Activated B cell treated with CpG ODN at 0.5 μM for 24 hours (primary cell): ENCODE measurements at regions of chr1 and their contacts with region 1.

Region 1: GRCh38 chr1:92298573-92299476 is at the starts of genes GLMN and RPAP2:
- DNase-seq: peak; percentile 82
- ATAC-seq: peak; percentile 96
- H3K4me3 Mint-ChIP-seq: peak within 1 kb of the TSS; percentile 99
- H3K27ac Mint-ChIP-seq: peak within 1 kb of the TSS; percentile 99
- H3K4me1 Mint-ChIP-seq: peaks cover 31% of the 10 kb centered on the region
- H3K27me3 Mint-ChIP-seq: no peaks in the 10 kb centered on the region
- CTCF ChIP-seq: no peak
- total RNA-seq, gene GLMN: 11.1 and 14.7 TPM in 2 replicates
- total RNA-seq, gene RPAP2: 27.1 and 31.7 TPM in 2 replicates

Region 2: DNA sequence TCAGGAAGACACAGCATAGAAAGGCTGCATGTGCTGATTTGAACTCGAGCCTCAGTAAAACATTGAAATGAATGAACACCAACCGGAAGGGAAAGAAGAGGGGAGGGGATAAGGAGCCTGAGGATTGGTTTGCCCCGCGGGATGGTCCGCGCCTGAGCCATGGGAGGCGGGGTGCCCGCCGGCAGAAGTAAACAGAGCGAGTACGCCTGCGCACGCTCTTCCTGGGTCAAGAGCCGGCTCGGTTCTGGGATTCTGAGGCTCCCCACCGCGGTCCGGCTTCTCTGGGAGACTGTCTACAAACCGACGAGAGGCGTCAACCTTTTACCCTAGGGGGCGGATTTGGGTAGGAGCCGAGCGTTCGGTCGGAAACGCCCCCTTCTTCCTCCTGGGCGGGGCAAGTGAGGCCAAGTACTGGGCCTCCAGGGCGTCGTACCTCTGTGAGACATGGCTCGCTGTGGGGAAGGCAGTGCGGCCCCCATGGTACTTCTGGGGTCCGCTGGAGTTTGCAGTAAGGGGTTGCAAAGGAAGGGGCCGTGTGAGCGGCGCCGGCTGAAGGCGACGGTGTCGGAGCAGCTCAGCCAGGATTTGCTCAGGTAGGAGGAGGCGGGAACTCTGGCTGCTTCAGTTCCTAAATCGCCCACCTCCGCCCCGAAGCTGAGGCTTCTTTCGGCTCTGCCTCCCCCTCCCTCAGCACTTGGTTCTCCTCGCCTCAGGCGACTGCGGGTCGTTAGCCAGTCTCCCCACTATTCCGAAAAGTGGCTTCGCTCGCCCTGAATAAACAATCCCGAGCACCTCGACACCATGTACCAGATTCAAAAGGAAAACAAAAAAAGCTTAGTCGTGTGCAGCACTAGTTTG is 218.5 kb before region 1 on chr1 and contains the start of gene BTBD8:
- CTCF ChIA-PET with region 1: no interaction called
- POLR2A ChIA-PET with region 1: no interaction called
- intact Hi-C with region 1: loop called (anchors 5 kb)
- DNase-seq: peak; percentile 71
- ATAC-seq: peak; percentile 97
- H3K4me3 Mint-ChIP-seq: peak within 1 kb of the TSS; percentile 94
- H3K27ac Mint-ChIP-seq: peak within 1 kb of the TSS; percentile 5
- H3K4me1 Mint-ChIP-seq: peaks cover 7% of the 10 kb centered on the region
- H3K27me3 Mint-ChIP-seq: peaks cover 2% of the 10 kb centered on the region
- CTCF ChIP-seq: no peak
- total RNA-seq, gene BTBD8: 0.46 and 0.51 TPM in 2 replicates

Region 3: DNA sequence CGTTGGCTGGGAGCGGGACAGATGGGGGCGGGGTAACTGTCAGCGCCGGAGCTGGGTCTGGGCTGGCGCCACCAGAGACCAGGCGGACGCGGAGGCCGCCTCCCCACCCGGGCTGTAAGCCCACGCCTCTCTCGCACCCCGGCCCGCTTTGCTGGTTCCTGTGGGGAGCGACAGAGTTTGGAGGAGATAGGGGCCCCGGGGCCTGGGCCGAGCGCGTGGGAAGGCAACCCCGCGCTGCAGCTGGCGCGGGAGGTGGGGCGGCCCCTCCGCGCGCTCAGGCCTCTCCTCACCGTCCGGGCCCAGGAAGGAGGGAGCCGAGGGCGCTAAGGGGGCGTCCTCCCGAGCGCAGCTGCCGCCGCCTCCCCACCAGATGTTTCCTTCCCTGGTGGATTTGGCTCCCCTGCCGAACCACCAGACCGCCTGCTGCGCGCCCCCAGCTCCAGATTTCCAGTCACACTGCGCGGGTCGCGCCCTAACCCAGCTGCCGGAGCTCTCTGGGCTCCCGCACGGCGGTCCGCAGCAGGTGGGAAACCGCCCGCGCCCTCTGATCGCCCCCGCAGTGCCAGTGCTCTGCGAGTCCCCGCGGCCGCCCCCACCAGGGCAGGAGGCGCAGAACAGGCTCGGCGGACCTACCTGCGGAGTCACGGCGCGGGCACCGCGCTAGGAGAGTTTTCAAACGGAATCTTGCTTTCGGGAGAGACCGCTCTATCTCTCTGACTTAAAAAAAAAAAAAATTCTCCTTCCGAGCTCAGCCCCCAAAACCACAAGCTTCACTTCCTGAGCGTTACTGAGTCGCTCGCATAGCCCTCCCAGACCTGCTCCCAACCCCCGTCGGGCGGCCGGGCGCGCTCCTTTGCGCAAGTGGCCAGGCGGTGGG is 186.8 kb after region 1 on chr1:
- CTCF ChIA-PET with region 1: no interaction called
- POLR2A ChIA-PET with region 1: interaction called, 4 read pairs
- intact Hi-C with region 1: loop called (anchors 1 kb)
- DNase-seq: peak; percentile 67
- ATAC-seq: peak; percentile 70
- H3K4me3 Mint-ChIP-seq: peak overlapping the region; percentile 90
- H3K27ac Mint-ChIP-seq: no peak overlapping the region
- H3K4me1 Mint-ChIP-seq: peaks cover 27% of the 10 kb centered on the region
- H3K27me3 Mint-ChIP-seq: peaks cover 14% of the 10 kb centered on the region
- CTCF ChIP-seq: no peak

Region 4: DNA sequence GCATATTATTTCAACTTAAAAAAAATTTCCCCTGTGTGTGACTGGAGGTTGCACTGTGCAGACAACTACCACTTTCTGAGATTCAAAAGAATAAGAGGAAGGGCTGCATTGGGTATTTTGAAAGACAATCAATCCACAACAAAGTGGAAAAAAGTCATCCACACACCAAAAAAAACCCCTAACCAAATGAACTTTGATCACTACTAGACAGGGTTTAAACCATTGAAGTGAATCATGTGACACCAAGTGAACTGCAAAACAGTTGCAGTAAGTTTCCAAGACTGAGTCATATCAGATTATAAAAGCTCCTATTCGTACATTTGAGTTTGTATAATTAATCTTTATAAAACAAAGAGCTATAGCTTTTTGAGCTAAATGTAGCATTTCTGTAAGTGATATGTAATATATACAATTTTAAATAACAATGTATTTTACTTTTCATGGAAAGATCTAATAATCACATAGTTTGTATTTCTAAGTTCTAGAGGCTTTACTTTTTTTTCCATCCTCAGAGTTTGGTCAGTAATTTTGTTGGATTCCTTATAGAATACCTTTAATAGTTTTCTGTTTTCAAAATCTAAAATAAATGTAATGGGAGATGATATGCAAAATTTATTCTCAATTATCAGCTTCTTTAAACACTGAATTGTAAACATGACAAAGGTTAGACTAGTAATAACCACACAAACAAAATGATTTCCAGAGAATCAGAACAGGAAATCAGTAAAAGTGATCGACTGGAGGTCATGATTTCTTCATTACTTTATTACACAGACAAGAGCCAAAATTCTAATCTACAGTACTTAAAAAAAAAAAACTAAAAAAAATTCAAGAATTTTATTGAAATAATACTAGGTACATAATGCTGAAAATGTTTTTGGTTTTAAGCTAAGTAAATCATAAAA is 238.4 kb after region 1 on chr1:
- CTCF ChIA-PET with region 1: no interaction called
- POLR2A ChIA-PET with region 1: interaction called, 4 read pairs
- intact Hi-C with region 1: loop called (anchors 2 kb)
- DNase-seq: no peak
- ATAC-seq: peak; percentile 75
- H3K4me3 Mint-ChIP-seq: peak overlapping the region; percentile 59
- H3K27ac Mint-ChIP-seq: peak overlapping the region; percentile 65
- H3K4me1 Mint-ChIP-seq: peaks cover 45% of the 10 kb centered on the region
- H3K27me3 Mint-ChIP-seq: no peaks in the 10 kb centered on the region
- CTCF ChIP-seq: no peak